Left ventricle myocardium inferior (tissue), 1 donor: ENCODE measurements at regions of chr1 and their contacts with region 1.

Region 1: GRCh38 chr1:210400043-210400840 is 71.5 kb downstream of the HHAT start:
- DNase-seq: peak; percentile 43
- H3K4me3 ChIP-seq: no peak overlapping the region
- H3K27ac ChIP-seq: no peak overlapping the region
- H3K4me1 ChIP-seq: peaks cover 8% of the 10 kb centered on the region
- H3K27me3 ChIP-seq: no peaks in the 10 kb centered on the region
- CTCF ChIP-seq: peak; percentile 89

Region 2: DNA sequence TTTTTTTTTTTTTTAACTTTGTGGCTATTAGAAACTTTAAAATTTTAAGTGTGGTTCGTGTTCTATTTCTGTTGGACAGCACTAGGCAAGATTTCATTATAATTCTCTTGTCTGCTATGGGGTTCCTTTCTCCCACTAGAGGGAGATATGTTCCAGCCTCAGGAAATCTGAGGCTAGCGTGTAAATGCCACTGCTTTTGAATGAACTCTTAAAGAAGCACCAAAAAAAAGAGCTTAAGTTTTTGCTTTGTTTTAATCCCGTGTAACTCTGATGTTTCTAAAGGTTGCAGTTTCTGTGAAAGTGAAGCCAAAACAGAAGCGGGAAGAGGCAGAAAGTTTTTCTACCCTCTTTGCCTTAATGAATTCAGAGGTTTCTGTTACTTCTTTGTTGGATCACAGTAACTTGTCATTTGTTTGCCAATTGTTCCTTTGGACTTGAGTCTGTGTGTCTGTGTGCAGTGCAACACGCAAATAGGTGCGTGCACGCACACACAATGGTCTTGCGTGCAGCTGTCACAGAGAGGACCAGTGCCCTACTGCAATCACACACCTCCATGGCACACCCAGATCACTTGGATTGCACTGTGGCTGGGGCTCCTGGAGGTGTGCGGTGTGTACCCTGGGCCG is 39.3 kb before region 1 on chr1:
- intact Hi-C with region 1: loop called (anchors 5 kb)
- DNase-seq: no peak
- H3K4me3 ChIP-seq: no peak overlapping the region
- H3K27ac ChIP-seq: peak overlapping the region; percentile 70
- H3K4me1 ChIP-seq: peaks cover 30% of the 10 kb centered on the region
- H3K27me3 ChIP-seq: no peaks in the 10 kb centered on the region
- CTCF ChIP-seq: peak; percentile 77

Region 3: DNA sequence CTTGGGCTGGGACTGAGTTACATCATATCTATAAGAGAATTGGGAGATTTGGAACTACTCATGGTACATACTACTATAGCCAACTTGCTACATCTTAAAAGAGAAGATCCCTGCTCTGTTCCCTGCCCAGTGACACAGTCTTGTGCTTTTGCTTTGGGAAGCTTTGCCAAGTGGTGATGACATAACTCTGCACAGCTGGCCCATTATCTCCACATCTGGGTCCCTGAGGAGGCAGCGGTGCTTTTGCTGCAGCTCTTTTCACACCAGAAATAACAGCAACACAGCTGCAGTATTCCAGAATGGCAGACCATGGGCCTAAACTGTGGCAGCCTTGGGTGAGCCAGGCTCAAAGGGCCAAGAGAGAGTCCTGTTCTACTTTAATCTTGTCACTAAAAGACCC is 224.5 kb after region 1 on chr1:
- intact Hi-C with region 1: no loop called
- DNase-seq: peak; percentile 37
- H3K4me3 ChIP-seq: no peak overlapping the region
- H3K27ac ChIP-seq: no peak overlapping the region
- H3K4me1 ChIP-seq: peaks cover 17% of the 10 kb centered on the region
- H3K27me3 ChIP-seq: no peaks in the 10 kb centered on the region
- CTCF ChIP-seq: no peak

Region 4: GRCh38 chr1:210908257-210908656 is 508.0 kb after region 1 on chr1:
- intact Hi-C with region 1: no loop called
- DNase-seq: no peak
- H3K4me3 ChIP-seq: no peak overlapping the region
- H3K27ac ChIP-seq: no peak overlapping the region
- H3K4me1 ChIP-seq: peaks cover 14% of the 10 kb centered on the region
- H3K27me3 ChIP-seq: peaks cover 6% of the 10 kb centered on the region
- CTCF ChIP-seq: no peak